Sciatic nerve (tissue), 2 donors: ENCODE measurements at regions of chr13 and their contacts with region 1.

Region 1: GRCh38 chr13:30865123-30866049 is 40.7 kb upstream of the MEDAG start:
- DNase-seq: peak; percentile 83
- ATAC-seq: peak; percentile 87

Region 2: DNA sequence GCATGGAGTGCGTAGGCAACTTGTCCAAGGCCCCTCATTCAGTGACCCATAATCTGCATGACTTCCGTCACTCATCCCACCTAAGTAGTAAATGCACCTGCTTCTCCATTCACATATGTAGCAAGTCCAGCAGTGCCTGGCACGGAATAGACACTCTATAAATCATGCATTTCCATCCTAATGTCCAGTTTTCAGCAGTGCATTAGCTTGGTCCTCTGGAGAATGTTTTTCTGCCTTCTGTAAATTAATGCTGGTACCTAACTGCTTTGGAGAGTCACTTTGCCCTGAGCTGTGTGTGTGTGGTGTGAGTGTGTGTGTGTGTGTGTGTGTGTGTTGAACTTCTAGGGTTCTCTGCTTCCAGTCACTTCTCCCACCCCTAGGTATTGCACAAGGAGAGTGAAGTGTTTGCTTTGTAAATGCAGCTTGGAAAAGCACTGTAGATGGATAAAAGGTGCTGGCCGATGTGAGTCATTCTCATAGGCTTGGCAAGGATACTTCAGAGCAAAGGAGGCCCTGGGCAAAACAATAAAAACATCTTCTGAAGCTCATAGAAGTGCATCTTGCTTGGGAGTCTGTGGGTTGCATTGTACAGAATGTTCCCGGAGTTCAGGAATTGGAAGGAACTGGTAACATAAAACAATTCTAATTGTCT is 739.8 kb before region 1 on chr13:
- intact Hi-C with region 1: loop called (anchors 10 kb)
- DNase-seq: no peak
- ATAC-seq: peak; percentile 90

Region 3: DNA sequence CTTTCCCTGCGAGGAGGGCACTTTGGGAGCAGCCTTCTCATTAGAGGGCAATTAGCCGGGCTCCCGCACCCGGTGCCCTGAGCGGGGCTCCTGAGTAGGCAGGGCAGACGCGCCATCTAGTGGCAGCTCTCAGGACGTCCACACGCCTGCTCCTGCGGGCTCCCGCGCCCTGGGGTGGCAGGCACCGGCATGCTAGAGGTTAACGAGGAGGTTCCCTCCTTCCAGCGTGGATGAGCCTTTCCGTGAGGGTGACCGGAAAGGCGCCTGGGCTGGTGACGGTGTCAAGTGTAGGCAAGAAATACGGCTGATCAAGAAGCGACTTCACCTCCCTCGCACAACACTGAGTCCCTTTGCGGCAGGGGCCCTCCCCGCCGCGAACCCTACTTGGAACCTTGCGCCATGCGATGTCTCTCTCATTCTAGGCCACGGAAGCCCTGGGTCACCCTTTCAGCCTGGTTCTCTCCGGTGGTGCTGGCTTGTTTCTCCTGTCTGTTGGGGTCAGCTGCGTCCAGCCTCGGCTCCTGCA is 62.4 kb before region 1 on chr13:
- intact Hi-C with region 1: loop called (anchors 10 kb)
- DNase-seq: peak; percentile 94
- ATAC-seq: peak; percentile 97